Caco-2 (cell line): ENCODE measurements at regions of chr6 and their contacts with region 1.

Region 1: DNA sequence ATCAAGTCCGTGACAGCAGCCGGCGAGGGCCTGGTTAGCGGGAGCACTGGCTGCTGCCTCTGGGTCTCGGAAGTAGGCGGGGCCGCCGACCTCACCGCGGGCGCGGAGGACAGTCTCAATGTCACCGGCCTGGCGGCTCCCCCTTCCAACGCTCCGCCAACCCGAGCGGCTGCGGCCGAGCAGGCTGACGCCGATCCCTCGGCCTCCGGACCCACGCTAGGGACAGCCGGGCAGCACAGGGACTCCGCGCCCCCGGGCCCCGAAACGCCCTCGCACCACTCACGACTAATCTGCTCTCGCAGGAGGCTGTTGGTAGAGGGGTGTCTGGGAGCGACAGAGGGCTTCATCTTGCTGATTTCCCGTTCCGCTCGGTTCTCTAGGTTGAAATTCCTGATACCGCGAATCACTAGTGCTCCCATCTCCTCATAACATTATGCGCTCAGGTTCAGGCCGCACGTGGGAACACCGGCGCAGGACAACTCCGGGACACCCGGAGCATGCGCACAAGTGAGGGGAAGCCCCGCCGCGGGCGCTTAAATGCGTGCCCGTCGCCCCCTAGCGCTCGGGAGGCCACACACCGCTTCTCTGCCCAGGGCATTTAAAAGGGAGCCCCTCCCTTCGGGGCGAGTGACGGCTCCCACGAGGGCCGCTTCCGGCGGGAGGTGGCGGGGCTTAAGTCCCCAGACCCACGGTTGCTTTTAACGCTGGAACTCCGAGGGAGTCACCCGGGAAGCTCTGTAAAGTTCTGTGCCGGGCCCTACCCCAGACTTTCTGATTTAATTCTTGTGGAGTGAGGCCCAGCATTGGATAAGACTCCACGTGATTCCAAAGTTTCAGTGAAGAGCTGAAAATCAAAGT is at the start of gene NDUFAF4:
- DNase-seq: peak; percentile 93 to 95
- H3K4me3 ChIP-seq: peak within 1 kb of the TSS; percentile 93
- H3K4me3 Mint-ChIP-seq: peak within 1 kb of the TSS; percentile 75
- H3K27ac Mint-ChIP-seq: peak within 1 kb of the TSS; percentile 67
- H3K4me1 ChIP-seq: peaks cover 6% of the 10 kb centered on the region; the same call in 1 of the 2 replicates
- H3K4me1 Mint-ChIP-seq: peaks cover 8% of the 10 kb centered on the region
- H3K27me3 ChIP-seq: no peaks in the 10 kb centered on the region
- H3K27me3 Mint-ChIP-seq: no peaks in the 10 kb centered on the region
- CTCF ChIP-seq: peak; percentile 81 to 87
- total RNA-seq, gene NDUFAF4: 44.1 and 51.8 TPM in 2 replicates

Region 2: DNA sequence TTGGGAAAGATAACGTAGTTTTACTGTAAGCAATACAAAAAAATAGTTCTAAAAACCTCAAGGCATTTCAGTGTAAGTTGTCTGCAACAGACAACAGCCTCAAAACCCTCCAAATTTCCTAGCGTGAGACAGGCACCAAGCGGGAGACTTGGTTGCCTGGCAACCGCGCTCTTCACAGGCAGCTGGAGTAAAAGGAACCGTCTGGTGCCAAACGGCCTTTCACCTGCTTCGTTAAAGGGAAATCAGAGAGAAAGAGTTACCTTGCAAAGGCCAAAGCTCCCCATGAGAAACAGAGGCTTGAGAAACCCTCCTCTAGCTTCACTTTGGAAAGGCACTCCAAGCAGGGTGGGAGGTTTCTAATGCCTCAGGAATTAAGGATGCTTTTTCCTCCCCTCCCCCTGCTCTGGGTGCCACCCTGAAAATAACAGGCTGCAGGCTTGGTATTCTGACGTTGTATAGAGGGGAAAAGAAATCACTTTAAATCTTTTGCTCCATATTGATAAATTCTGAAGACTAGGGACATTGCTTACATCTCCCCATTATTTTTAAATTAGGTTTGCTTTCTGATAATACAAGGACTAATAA is 505.7 kb before region 1 on chr6:
- CTCF ChIA-PET with region 1: no interaction called
- POLR2A ChIA-PET with region 1: no interaction called
- intact Hi-C with region 1: loop called (anchors 5 kb)
- DNase-seq: no peak
- H3K4me3 ChIP-seq: no peak overlapping the region
- H3K4me3 Mint-ChIP-seq: no peak overlapping the region
- H3K27ac Mint-ChIP-seq: no peak overlapping the region
- H3K4me1 ChIP-seq: no peaks in the 10 kb centered on the region
- H3K4me1 Mint-ChIP-seq: peaks cover 10% of the 10 kb centered on the region
- H3K27me3 ChIP-seq: no peaks in the 10 kb centered on the region
- H3K27me3 Mint-ChIP-seq: no peaks in the 10 kb centered on the region
- CTCF ChIP-seq: no peak

Region 3: DNA sequence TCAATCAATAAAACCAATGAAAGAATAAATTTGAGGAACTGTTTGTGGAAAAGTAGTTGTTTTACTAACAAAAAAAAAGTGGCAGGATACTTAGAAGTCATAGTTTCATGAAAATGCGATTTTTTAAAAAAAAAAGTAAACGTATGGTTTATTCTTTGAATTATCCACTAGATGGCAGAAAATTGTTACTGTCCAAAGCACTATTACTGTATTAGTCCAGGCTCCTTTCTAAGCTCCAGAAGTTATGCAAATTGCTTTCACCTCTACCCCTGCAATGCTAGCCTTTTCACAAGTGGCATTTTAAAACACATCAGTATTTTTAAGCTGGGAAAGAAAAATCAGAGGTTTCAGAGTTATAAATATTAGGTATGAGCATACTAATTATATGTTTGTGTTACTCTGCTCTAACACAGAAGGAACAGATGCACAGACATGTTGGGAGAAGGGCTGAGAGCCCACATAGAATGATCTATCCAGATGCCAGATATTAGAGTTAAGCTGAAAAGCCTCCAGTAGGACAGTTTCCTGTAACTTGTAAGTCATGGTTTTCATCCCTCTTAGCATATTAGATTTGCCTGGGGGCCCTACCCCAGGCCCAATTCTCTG is 270.8 kb before region 1 on chr6:
- CTCF ChIA-PET with region 1: interaction called, 4 read pairs
- POLR2A ChIA-PET with region 1: no interaction called
- intact Hi-C with region 1: loop called (anchors 1 kb)
- DNase-seq: peak in 1 of 2 experiments; percentile 3
- H3K4me3 ChIP-seq: no peak overlapping the region
- H3K4me3 Mint-ChIP-seq: no peak overlapping the region
- H3K27ac Mint-ChIP-seq: no peak overlapping the region
- H3K4me1 ChIP-seq: peaks cover 3% of the 10 kb centered on the region; the same call in 1 of the 2 replicates
- H3K4me1 Mint-ChIP-seq: peaks cover 11% of the 10 kb centered on the region
- H3K27me3 ChIP-seq: no peaks in the 10 kb centered on the region
- H3K27me3 Mint-ChIP-seq: peaks cover 8% of the 10 kb centered on the region
- CTCF ChIP-seq: peak; percentile 19 to 31

Region 4: DNA sequence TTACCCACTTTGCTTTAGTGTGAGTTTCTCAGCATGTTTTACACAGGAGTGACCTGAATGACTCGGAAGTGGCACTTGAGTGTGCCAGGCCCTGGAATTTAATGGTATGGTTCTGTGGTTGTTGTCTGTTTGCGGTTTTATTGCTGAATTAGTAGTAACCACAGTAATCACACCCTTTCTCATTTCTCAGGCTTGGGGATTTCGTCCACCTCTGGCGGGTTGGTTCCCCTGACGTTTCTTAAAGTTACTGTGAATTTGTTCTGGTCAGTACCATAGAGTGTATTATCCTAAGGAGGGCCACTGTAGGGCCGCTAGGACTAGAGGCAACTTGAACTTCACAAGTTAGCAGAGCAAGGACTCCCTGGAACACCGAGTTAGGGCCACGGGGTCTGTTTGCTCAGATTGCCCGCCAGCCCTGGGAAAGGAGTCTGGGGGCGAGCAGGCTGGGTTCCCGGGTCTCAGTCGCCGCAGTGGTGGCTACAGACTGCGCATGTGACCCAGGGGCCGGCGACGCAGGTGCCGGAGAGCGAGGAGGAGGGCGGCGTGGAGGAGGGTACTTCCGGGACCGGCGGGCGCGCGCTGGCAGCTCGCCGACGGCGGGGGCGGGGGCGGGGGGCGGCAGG is 26.4 kb after region 1 on chr6:
- CTCF ChIA-PET with region 1: no interaction called
- POLR2A ChIA-PET with region 1: no interaction called
- intact Hi-C with region 1: loop called (anchors 1 kb)
- DNase-seq: peak in 1 of 2 experiments; percentile 2
- H3K4me3 ChIP-seq: peak overlapping the region; percentile 87
- H3K4me3 Mint-ChIP-seq: peak overlapping the region; percentile 94
- H3K27ac Mint-ChIP-seq: peak overlapping the region; percentile 77
- H3K4me1 ChIP-seq: no peaks in the 10 kb centered on the region
- H3K4me1 Mint-ChIP-seq: no peaks in the 10 kb centered on the region
- H3K27me3 ChIP-seq: no peaks in the 10 kb centered on the region
- H3K27me3 Mint-ChIP-seq: peaks cover 14% of the 10 kb centered on the region
- CTCF ChIP-seq: no peak

Region 5: DNA sequence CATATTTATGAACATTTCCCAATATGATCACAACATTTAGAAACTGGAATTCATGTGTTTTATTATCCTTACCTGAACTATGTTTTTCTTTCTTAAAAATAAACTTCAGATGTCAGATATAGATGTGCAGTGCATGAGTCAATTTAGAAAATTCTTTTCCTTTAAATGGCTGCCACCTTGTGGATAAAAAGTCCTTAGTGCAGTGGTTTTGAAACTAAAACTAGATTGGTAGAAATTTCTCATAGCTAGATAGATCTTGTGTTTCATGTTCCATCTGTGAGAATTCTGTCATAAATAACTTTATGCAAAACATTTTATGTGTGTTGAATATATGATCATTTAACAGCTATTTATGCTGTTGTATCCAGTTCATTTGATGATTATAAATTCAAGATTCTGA is 161.9 kb after region 1 on chr6:
- CTCF ChIA-PET with region 1: interaction called, 5 read pairs
- POLR2A ChIA-PET with region 1: no interaction called
- intact Hi-C with region 1: loop called (anchors 1 kb)
- DNase-seq: peak in 1 of 2 experiments; percentile 8
- H3K4me3 ChIP-seq: no peak overlapping the region
- H3K4me3 Mint-ChIP-seq: no peak overlapping the region
- H3K27ac Mint-ChIP-seq: no peak overlapping the region
- H3K4me1 ChIP-seq: no peaks in the 10 kb centered on the region; the same call in 1 of the 2 replicates
- H3K4me1 Mint-ChIP-seq: peaks cover 14% of the 10 kb centered on the region
- H3K27me3 ChIP-seq: no peaks in the 10 kb centered on the region
- H3K27me3 Mint-ChIP-seq: peaks cover 11% of the 10 kb centered on the region
- CTCF ChIP-seq: peak; percentile 40 to 43